ENCODE measurements at regions of chr22 and their contacts with region 1.

Region 1: GRCh38 chr22:26511857-26512793 is at the start of gene TFIP11:
- DNase-seq: peak; percentile 91
- ATAC-seq: peak; percentile 95
- H3K4me3 ChIP-seq: peak within 1 kb of the TSS; percentile 72 to 97 (median 81)
- H3K4me3 Mint-ChIP-seq: peak within 1 kb of the TSS; percentile 100
- H3K27ac ChIP-seq: peak within 1 kb of the TSS; percentile 62 to 94
- H3K27ac Mint-ChIP-seq: peak within 1 kb of the TSS; percentile 96
- H3K4me1 ChIP-seq: peaks cover 17 to 21% of the 10 kb centered on the region in 2 donors
- H3K4me1 Mint-ChIP-seq: peaks cover 41% of the 10 kb centered on the region
- H3K27me3 ChIP-seq: no peaks in the 10 kb centered on the region
- H3K27me3 Mint-ChIP-seq: no peaks in the 10 kb centered on the region
- CTCF ChIP-seq: no peak
- total RNA-seq, gene TFIP11: 82.8 and 83.4 TPM in 2 replicates

Region 2: GRCh38 chr22:26436903-26437515 is 75.1 kb before region 1 on chr22:
- CTCF ChIA-PET with region 1: no interaction called
- POLR2A ChIA-PET with region 1: no interaction called
- intact Hi-C with region 1: no loop called
- DNase-seq: no peak
- ATAC-seq: no peak
- H3K4me3 ChIP-seq: no peak overlapping the region
- H3K4me3 Mint-ChIP-seq: no peak overlapping the region
- H3K27ac ChIP-seq: no peak overlapping the region
- H3K27ac Mint-ChIP-seq: no peak overlapping the region
- H3K4me1 ChIP-seq: peaks cover 13 to 17% of the 10 kb centered on the region in 2 donors
- H3K4me1 Mint-ChIP-seq: peaks cover 39% of the 10 kb centered on the region
- H3K27me3 ChIP-seq: no peaks in the 10 kb centered on the region
- H3K27me3 Mint-ChIP-seq: no peaks in the 10 kb centered on the region
- CTCF ChIP-seq: no peak

Region 3: DNA sequence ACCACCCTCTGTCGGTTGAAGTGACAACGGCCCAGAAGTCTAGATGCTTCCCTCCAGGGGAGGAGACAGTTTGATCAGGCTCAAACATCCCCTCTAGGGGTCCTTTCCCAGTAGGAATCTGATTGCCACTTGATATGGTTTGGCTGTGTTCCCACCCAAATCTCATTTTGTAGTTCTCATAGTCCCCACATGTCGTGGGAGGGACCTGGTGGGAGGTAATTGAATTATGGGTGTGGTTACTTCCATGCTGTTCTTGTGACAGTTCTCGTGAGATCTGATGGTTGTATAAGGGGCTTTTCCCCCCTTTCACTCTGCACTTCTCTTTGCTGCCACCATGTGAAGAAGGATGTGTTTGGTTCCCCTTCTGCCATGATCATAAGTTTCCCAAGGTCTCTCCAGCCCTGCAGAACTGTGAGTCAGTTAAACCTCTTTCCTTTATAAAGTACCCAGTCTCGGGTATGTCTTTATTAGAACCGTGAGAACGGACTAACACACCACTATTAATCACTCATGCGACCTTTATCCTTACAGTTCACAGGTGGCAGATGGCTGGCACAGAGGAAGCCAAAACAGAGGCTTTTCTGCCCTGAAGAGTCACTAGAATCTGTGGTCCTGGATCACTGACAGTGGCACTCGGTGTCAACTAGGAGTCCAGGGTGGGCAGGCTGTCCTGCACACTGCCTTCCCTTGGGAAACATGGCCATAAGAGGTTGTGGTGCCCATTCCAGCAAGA is 61.5 kb before region 1 on chr22:
- CTCF ChIA-PET with region 1: no interaction called
- POLR2A ChIA-PET with region 1: no interaction called
- intact Hi-C with region 1: no loop called
- DNase-seq: no peak
- ATAC-seq: no peak
- H3K4me3 ChIP-seq: no peak overlapping the region
- H3K4me3 Mint-ChIP-seq: no peak overlapping the region
- H3K27ac ChIP-seq: no peak overlapping the region
- H3K27ac Mint-ChIP-seq: no peak overlapping the region
- H3K4me1 ChIP-seq: no peaks in the 10 kb centered on the region
- H3K4me1 Mint-ChIP-seq: no peaks in the 10 kb centered on the region
- H3K27me3 ChIP-seq: no peaks in the 10 kb centered on the region
- H3K27me3 Mint-ChIP-seq: no peaks in the 10 kb centered on the region
- CTCF ChIP-seq: no peak

Region 4: GRCh38 chr22:26483439-26484359 is 28.4 kb before region 1 on chr22 and contains the starts of genes HPS4 and SRRD:
- CTCF ChIA-PET with region 1: no interaction called
- POLR2A ChIA-PET with region 1: interaction called, 8 read pairs
- intact Hi-C with region 1: loop called (anchors 1 kb)
- DNase-seq: peak; percentile 97
- ATAC-seq: peak; percentile 83
- H3K4me3 ChIP-seq: peak within 1 kb of the TSS; percentile 70 to 98 (median 83)
- H3K4me3 Mint-ChIP-seq: peak within 1 kb of the TSS; percentile 94
- H3K27ac ChIP-seq: peak within 1 kb of the TSS; percentile 90 to 98
- H3K27ac Mint-ChIP-seq: peak within 1 kb of the TSS; percentile 97
- H3K4me1 ChIP-seq: peaks cover 49 to 58% of the 10 kb centered on the region in 2 donors
- H3K4me1 Mint-ChIP-seq: peaks cover 69% of the 10 kb centered on the region
- H3K27me3 ChIP-seq: no peaks in the 10 kb centered on the region
- H3K27me3 Mint-ChIP-seq: no peaks in the 10 kb centered on the region
- CTCF ChIP-seq: no peak
- total RNA-seq, gene HPS4: 61.8 and 76.6 TPM in 2 replicates
- total RNA-seq, gene SRRD: 19.2 and 19.4 TPM in 2 replicates